ENCODE measurements at regions of chr7 and their contacts with region 1.

Region 1: GRCh38 chr7:22559829-22560489 is 60.0 kb upstream of the STEAP1B start:
- DNase-seq: peak in 1 of 2 donors; percentile 74
- ATAC-seq: peak; percentile 88

Region 2: GRCh38 chr7:22238354-22239311 is 321.3 kb before region 1 on chr7:
- intact Hi-C with region 1: no loop called
- DNase-seq: no peak
- ATAC-seq: no peak

Region 3: GRCh38 chr7:22726345-22727185 is 166.6 kb after region 1 on chr7:
- intact Hi-C with region 1: loop called in 1 of 2 experiments (anchors 5 kb)
- DNase-seq: peak in 1 of 2 donors; percentile 27
- ATAC-seq: peak; percentile 70

Region 4: GRCh38 chr7:22782616-22783232 is 222.8 kb after region 1 on chr7:
- intact Hi-C with region 1: loop called in 1 of 2 experiments (anchors 10 kb)
- DNase-seq: peak; percentile 34 to 80
- ATAC-seq: peak; percentile 51

Region 5: GRCh38 chr7:22962775-22963358 is 402.9 kb after region 1 on chr7:
- intact Hi-C with region 1: no loop called
- DNase-seq: no peak
- ATAC-seq: no peak

Region 6: DNA sequence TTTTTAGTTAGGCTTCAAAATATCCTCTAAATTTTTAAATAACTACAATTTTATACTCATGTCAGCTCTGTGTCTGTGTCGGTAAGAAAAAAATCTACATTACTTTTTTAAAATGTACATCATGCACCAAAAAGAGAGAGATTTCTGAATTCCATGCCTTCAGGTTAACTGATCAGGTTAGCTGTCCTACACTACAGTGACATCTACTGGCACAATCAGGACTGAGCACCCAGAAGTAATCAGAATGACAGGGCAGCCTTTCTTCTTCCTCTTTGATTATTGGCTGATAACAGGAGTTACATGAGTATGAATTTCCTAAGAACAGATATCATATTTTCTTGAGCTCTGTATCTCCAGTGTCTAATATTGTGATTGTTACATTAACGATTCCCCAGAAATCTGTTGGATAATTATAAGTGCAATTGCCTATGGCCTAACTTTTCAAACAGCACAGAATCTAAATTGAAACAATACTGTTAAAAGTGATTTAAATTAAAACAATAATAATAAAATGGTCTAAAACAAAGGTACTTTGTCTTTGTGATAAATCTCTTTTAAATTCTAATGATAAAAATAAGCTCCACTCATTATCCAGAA is 495.7 kb after region 1 on chr7:
- intact Hi-C with region 1: loop called in 1 of 2 experiments (anchors 10 kb)
- DNase-seq: peak in 1 of 2 donors; percentile 33
- ATAC-seq: peak; percentile 78